GM13977 (cell line): ENCODE measurements at regions of chr17 and their contacts with region 1.

Region 1: GRCh38 chr17:27939474-27940465 is 46.6 kb upstream of the LYRM9 start:
- DNase-seq: peak; percentile 37
- CTCF ChIP-seq: no peak

Region 2: GRCh38 chr17:27846042-27846655 is 93.6 kb before region 1 on chr17:
- in situ Hi-C with region 1: loop called (anchors 25 kb)
- DNase-seq: no peak
- CTCF ChIP-seq: no peak

Region 3: GRCh38 chr17:27868576-27868975 is 71.2 kb before region 1 on chr17:
- in situ Hi-C with region 1: no loop called
- DNase-seq: no peak
- CTCF ChIP-seq: peak; percentile 8